Dendritic cell treated with granulocyte-macrophage colony-stimulating factor and Interleukin-4, amounts not matched to agents 40 ng/mL and 50 ng/mL, for 4 days (primary cell): ENCODE measurements at regions of chr10 and their contacts with region 1.

Region 1: DNA sequence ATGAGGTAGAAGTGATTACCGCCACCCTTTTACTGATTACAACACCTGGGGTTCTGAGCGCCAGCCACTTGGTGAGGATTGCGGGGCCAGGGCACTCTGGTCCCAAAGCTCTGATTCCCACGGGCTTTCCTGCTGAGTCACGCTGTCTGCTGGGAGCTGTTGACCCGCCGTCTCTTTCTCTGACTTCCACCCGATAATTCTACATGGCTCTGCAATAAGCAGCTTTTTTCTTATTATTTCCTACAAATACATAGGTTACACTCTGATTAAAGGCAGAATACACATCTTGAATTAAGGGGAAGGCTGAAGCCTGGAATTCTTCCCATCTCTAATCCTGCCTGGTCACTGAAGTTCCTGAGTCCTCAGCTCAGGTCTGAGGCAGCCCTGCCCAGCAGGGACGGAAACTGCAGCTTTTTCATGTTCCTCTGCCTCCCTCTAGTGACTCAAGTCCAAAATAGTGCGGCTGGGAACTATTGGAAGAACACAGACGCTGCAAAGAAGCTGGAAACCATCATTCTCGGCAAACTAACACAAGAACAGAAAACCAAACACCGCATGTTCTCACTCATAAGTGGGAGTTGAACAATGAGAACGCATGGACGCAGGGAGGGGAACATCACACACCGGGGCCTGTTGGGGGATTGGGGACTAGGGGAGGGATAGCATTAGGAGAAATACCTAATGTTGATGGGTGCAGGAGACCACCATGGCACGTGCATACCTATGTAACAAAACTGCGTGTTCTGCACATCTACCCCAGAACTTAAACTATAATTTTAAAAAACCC is 178.3 kb downstream of the PRKCQ start:
- H3K4me3 Mint-ChIP-seq: peak overlapping the region; percentile 64
- H3K27ac Mint-ChIP-seq: peak overlapping the region; percentile 64
- H3K4me1 Mint-ChIP-seq: peaks cover 41% of the 10 kb centered on the region
- H3K27me3 Mint-ChIP-seq: peaks cover 21% of the 10 kb centered on the region

Region 2: GRCh38 chr10:5948999-5949759 is 452.6 kb before region 1 on chr10:
- intact Hi-C with region 1: loop called (anchors 5 kb)
- H3K4me3 Mint-ChIP-seq: no peak overlapping the region
- H3K27ac Mint-ChIP-seq: no peak overlapping the region
- H3K4me1 Mint-ChIP-seq: peaks cover 51% of the 10 kb centered on the region
- H3K27me3 Mint-ChIP-seq: no peaks in the 10 kb centered on the region

Region 3: GRCh38 chr10:6014241-6014761 is 387.5 kb before region 1 on chr10:
- intact Hi-C with region 1: loop called (anchors 10 kb)
- H3K4me3 Mint-ChIP-seq: no peak overlapping the region
- H3K27ac Mint-ChIP-seq: no peak overlapping the region
- H3K4me1 Mint-ChIP-seq: peaks cover 12% of the 10 kb centered on the region
- H3K27me3 Mint-ChIP-seq: no peaks in the 10 kb centered on the region

Region 4: GRCh38 chr10:6088721-6089390 is 312.9 kb before region 1 on chr10 and contains the start of gene RBM17:
- intact Hi-C with region 1: loop called (anchors 2 kb)
- H3K4me3 Mint-ChIP-seq: peak within 1 kb of the TSS; percentile 93
- H3K27ac Mint-ChIP-seq: peak within 1 kb of the TSS; percentile 90
- H3K4me1 Mint-ChIP-seq: peaks cover 62% of the 10 kb centered on the region
- H3K27me3 Mint-ChIP-seq: no peaks in the 10 kb centered on the region

Region 5: GRCh38 chr10:6108603-6109443 is 292.9 kb before region 1 on chr10:
- intact Hi-C with region 1: loop called (anchors 1 kb)
- H3K4me3 Mint-ChIP-seq: no peak overlapping the region
- H3K27ac Mint-ChIP-seq: no peak overlapping the region
- H3K4me1 Mint-ChIP-seq: peaks cover 10% of the 10 kb centered on the region
- H3K27me3 Mint-ChIP-seq: no peaks in the 10 kb centered on the region

Region 6: DNA sequence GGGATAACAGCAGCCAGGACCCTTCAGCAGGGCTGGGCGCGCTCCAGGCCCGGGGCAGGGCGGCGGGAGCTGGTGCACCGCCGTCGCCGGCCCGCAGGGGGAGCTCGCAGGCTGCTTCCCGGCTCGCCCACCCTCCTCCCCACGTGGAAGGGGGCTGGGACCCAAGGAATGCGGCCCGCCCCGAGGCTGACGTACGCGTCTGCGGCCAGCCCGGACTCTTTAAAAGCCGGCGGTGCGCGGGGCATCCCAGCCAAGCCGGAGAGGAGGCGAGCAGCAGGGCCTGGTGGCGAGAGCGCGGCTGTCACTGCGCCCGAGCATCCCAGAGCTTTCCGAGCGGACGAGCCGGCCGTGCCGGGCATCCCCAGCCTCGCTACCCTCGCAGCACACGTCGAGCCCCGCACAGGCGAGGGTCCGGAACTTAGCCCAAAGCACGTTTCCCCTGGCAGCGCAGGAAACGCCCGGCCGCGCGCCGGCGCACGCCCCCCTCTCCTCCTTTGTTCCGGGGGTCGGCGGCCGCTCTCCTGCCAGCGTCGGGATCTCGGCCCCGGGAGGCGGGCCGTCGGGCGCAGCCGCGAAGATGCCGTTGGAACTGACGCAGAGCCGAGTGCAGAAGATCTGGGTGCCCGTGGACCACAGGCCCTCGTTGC is 198.9 kb before region 1 on chr10 and contains the start of gene PFKFB3:
- intact Hi-C with region 1: loop called (anchors 1 kb)
- H3K4me3 Mint-ChIP-seq: peak within 1 kb of the TSS; percentile 89
- H3K27ac Mint-ChIP-seq: peak within 1 kb of the TSS; percentile 68
- H3K4me1 Mint-ChIP-seq: peaks cover 59% of the 10 kb centered on the region
- H3K27me3 Mint-ChIP-seq: peaks cover 13% of the 10 kb centered on the region

Region 7: GRCh38 chr10:6445501-6446316 is 44.0 kb after region 1 on chr10:
- intact Hi-C with region 1: no loop called
- H3K4me3 Mint-ChIP-seq: peak overlapping the region; percentile 28
- H3K27ac Mint-ChIP-seq: no peak overlapping the region
- H3K4me1 Mint-ChIP-seq: no peaks in the 10 kb centered on the region
- H3K27me3 Mint-ChIP-seq: no peaks in the 10 kb centered on the region